Sigmoid colon (tissue), 7 donors: ENCODE measurements at regions of chr3 and their contacts with region 1.

Region 1: GRCh38 chr3:42662813-42663621 is 9.5 kb downstream of the ZBTB47 start:
- DNase-seq: peak; percentile 59
- H3K4me3 ChIP-seq: no peak overlapping the region
- H3K27ac ChIP-seq: no peak overlapping the region
- H3K4me1 ChIP-seq: peaks cover 0 to 53% (median 51%) of the 10 kb centered on the region in 4 donors
- H3K27me3 ChIP-seq: no peaks in the 10 kb centered on the region
- CTCF ChIP-seq: no peak
- EP300 ChIP-seq: no peak
- POLR2A ChIP-seq: no peak

Region 2: DNA sequence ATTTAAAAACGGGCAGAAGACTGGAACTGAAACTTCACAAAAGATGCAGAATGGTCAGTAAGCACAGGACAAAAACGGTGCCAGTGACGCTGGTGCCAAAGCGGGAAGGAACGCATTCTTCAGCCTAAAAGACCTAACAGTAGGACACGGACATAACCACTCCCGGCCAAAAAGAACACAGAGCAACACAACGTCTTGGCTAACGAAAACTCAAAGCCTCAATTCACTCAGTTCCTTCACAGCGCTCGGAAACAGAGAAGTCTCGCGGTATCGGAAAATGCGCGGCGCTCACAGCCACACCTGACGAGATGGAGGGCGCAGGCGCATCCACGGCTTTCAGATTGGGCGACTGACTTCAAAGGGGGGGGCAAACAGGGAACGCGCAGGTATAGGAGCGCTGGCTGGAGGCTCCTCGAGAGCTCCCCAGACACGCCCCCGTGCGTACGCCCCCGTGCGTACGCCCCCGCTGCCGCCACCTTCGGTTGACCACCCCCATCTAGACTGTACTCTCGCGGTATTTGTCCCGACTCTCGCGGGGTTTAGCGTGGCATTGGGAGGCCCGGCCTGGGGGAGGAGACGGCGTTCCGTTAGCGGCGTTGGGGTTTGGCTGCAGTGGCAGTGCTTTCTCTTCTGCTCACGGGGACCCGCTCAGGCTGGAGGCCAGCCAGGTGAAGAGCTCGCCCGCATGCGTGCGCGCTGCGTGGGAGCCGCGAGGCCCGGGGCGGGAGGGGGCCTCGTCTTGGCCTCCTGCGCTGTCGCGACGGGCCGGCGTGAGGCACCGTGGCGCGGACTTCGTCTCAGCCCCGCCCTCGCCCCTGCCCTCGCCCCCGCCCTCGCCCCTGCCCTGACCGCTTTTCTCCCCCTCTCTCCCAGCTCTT is 62.7 kb before region 1 on chr3 and contains the start of gene NKTR:
- intact Hi-C with region 1: no loop called
- DNase-seq: peak; percentile 98
- H3K4me3 ChIP-seq: peak within 1 kb of the TSS; percentile 70 to 89 (median 86)
- H3K27ac ChIP-seq: peak within 1 kb of the TSS; percentile 94 to 98 (median 96)
- H3K4me1 ChIP-seq: peaks cover 0 to 27% (median 24%) of the 10 kb centered on the region in 4 donors
- H3K27me3 ChIP-seq: no peaks in the 10 kb centered on the region
- CTCF ChIP-seq: no peak
- EP300 ChIP-seq: no peak
- POLR2A ChIP-seq: peak; percentile 84 to 89
- total RNA-seq, gene NKTR: 81.3 to 130 (median 84.4) TPM

Region 3: DNA sequence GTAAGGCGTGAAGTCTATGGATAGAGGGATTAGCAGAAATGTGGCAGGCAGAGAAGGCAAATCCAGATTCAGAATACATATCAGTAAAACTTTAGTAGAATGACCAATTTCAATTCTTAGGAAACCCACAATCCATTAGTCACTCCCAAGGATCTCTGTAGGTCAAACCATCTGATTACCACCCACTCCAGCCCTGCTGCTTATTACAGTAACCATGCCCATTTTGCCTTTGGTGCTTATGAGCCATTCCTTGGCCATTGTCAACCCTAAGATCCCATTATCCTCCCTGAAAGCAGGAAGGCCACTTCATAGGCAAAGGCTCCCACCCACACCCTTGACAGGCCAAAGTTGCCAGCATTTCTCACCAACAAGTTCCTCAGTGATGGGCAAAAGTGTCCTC is 17.3 kb after region 1 on chr3:
- intact Hi-C with region 1: loop called (anchors 1 kb)
- DNase-seq: peak; percentile 9
- H3K4me3 ChIP-seq: no peak overlapping the region
- H3K27ac ChIP-seq: no peak overlapping the region
- H3K4me1 ChIP-seq: peaks cover 0 to 23% (median 18%) of the 10 kb centered on the region in 4 donors
- H3K27me3 ChIP-seq: no peaks in the 10 kb centered on the region
- CTCF ChIP-seq: no peak
- EP300 ChIP-seq: no peak
- POLR2A ChIP-seq: no peak